Motor neuron (in vitro differentiated cells): ENCODE measurements at regions of chr6 and their contacts with region 1.

Region 1: DNA sequence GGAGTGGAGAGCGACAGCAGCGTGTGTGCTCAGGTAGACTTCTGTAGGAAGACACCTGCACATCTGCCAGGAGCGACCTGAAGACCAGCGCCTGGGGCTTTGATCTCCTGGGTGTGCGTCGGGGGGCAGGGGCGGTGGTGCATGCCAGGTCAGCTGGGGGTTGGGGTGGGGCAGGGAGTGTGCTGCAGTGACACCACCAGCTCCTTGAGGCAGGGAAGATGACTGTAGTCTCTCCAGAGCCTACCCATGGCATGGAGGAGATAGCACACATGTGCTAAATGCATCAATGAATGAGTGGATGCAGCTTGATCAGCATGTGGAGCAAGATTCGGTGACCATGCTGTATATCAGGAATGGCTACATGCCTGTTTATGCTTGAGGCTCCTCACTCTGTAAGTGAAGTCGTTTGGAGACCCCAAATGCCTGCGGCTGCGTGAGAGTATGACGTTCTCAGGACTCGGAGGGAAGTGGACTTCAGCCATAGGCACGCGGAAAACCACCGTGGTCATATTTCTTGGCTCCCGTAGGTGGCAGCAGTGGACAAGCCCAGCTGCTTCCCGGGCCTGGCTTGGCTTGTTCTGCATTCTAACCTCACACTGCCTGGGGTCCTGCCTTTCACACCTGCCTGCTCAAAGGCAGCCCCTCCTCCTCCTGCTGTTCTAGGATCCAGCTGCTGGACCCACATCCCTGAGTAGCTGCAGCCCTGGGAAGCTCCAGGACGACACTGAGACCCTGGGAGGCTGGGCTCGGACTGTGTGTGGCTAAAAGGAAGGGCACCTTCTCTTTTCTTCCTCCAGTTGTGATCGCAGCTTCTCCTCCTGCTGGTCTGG is 39.4 kb upstream of the KCNK16 start:
- ATAC-seq: peak; percentile 85 to 97 (median 90)
- H3K4me3 ChIP-seq: no peak overlapping the region
- H3K27ac ChIP-seq: peak overlapping the region in 1 of 2 donors; percentile 26
- H3K4me1 ChIP-seq: peaks cover 6 to 8% of the 10 kb centered on the region in 2 donors

Region 2: DNA sequence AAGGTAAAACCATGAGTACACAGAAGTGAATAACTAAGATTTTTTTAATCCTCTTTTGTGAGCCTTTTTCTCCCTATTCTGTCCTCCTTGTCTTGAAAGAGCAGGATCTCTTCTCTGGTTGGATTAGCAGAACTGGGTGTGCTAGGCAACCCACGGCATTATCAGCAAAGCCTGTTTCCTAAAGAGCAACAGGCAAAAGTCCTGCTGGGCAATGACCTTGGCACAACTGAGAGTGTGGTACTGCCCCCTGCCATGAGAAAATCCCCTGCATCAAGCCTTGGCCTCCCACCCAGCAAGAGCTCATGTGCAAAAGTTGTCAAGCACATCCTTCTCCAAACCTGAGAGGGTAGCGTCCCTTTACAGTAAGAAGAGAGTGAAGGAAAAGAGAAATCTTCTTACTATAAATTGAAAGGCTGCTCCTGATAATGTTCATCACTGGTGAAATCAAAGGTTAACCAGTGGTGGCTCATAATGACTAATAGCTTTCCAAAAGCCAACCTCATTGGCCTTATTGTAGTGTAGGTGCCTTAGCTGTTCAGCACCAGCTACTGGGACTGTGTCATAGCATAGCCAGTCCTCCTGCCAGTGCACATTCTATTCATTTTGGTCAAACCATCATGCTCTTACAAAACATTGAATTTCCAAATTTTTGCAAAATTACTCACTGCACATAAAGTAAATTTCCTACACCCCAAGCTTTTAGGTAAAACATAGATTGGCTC is 346.3 kb after region 1 on chr6:
- in situ Hi-C with region 1: no loop called
- ATAC-seq: no peak
- H3K4me3 ChIP-seq: no peak overlapping the region
- H3K27ac ChIP-seq: no peak overlapping the region
- H3K4me1 ChIP-seq: no peaks in the 10 kb centered on the region

Region 3: GRCh38 chr6:39804466-39805065 is 442.7 kb after region 1 on chr6:
- in situ Hi-C with region 1: no loop called
- ATAC-seq: peak in 4 of 8 experiments; percentile 21 to 91 (median 52)
- H3K4me3 ChIP-seq: no peak overlapping the region
- H3K27ac ChIP-seq: no peak overlapping the region
- H3K4me1 ChIP-seq: peaks cover 7 to 16% of the 10 kb centered on the region in 2 donors

Region 4: DNA sequence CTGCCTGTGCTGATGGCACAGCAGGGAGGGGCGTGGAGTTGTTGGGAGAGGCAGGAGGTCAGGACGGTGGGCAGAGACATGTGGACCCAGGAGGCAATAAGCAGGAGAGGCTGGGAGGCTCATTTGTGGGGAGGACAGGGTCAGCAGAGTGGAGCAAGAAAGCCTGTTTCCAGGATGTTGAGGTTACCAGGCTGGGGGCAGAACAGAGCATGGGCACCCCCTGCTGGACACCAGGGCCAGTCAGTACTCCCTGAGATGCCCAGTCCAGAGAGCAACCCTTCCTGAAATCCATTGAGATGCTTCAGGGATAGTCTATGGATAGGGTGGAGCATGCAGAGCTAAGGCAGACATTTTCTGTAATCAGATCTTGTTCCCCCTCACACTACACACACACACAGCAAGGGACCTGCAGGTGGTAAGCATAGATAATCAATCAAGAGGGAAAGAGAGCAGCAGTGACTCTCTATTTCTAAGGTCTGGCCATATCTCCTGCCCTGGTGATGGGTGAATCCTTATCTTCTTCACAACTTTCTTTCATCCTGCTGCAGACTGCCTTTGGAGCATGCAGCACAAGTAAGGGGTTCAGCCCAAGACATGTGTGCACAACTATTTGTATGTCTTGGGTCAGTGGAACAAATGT is 530.7 kb after region 1 on chr6:
- in situ Hi-C with region 1: loop called in 1 of 9 experiments (anchors 25 kb)
- ATAC-seq: peak; percentile 54 to 84 (median 66)
- H3K4me3 ChIP-seq: no peak overlapping the region
- H3K27ac ChIP-seq: no peak overlapping the region
- H3K4me1 ChIP-seq: no peaks in the 10 kb centered on the region

Region 5: GRCh38 chr6:39923414-39923813 is 561.5 kb after region 1 on chr6:
- in situ Hi-C with region 1: loop called in 1 of 9 experiments (anchors 25 kb)
- ATAC-seq: no peak
- H3K4me3 ChIP-seq: no peak overlapping the region
- H3K27ac ChIP-seq: no peak overlapping the region
- H3K4me1 ChIP-seq: no peaks in the 10 kb centered on the region

Region 6: DNA sequence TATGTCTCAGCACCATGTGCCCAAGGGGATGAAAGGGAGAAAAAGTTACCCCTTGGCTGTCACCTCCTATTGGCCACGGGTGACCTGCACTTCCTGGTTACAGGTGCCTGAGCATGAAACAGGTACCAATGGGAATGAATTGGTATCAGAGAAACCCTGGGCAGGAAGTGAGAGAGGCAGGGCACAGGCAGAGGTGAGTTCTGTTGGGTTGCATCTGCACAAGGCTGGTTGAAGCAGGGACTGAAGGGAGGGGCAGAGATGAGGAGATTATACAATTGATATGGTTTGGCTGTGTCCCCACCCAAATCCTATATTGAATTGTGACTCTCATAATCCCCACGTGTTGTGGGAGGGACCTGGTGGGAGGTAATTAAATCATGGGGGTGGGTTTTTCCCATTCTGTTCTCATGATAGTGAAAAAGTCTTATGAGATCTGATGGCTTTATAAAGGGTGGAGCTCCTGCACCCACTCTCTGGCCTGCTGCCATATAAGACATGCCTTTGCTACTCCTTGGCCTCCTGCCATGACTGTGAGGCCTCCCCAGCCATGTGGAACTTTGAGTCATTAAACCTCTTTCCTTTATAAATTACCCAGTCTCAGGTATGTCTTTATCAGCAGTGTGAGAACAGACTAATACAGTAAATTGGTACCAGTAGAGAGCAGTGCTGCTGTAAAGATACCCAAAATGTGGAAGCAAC is 933.5 kb after region 1 on chr6:
- in situ Hi-C with region 1: loop called in 4 of 9 experiments (anchors 25 kb)
- ATAC-seq: peak in 1 of 8 experiments; percentile 30
- H3K4me3 ChIP-seq: no peak overlapping the region
- H3K27ac ChIP-seq: no peak overlapping the region
- H3K4me1 ChIP-seq: peaks cover 11 to 12% of the 10 kb centered on the region in 2 donors

Region 7: GRCh38 chr6:40308533-40309306 is 946.8 kb after region 1 on chr6:
- in situ Hi-C with region 1: loop called in 3 of 9 experiments (anchors 25 kb)
- ATAC-seq: peak; percentile 60 to 98 (median 74)
- H3K4me3 ChIP-seq: no peak overlapping the region
- H3K27ac ChIP-seq: no peak overlapping the region
- H3K4me1 ChIP-seq: peaks cover 0 to 5% of the 10 kb centered on the region in 2 donors

Region 8: DNA sequence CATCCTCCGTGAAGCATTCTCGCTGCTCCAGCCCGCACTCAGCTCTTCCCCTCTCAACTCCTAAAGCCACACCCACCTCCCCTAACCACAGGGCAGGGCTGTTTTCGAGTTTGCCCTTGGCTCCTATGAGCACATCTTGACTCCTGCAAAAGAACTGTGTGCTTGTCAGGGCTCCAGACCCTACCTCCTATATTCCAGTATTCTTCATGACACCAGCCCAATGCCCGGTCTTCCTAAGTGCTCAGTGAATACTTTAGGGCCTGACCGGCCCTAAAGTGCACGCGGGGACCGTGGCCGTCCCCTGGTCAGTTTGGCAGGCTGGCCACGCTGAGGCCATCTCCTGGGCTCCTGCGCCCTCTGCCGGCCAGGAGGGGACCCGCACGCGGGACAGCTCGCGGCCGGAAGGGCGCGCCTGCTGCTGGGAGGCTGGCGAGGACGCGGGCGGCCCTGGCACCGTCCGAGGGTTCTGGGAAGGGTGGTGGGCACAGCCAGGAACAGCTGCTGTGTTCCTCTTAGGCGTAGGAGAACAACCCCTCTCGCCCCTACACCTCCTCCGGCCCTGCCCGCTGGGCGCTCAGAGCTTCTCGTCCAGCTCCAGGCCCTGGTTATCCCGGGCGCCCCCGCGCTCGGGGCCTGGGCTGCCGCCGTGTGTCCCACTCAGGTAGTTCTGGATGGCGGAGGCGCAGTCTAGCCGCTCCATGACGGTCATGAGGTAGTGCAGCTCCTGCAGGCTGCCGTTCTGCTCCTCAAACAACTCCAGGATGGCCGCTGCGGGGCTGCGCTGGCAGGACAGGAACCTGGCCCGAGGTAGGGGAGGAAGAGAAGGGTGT is 1666.1 kb after region 1 on chr6:
- in situ Hi-C with region 1: loop called in 1 of 9 experiments (anchors 25 kb)
- ATAC-seq: peak; percentile 92 to 97 (median 94)
- H3K4me3 ChIP-seq: peak overlapping the region; percentile 7 to 28 (median 21)
- H3K27ac ChIP-seq: no peak overlapping the region
- H3K4me1 ChIP-seq: peaks cover 0 to 2% of the 10 kb centered on the region in 2 donors

Region 9: GRCh38 chr6:41072676-41073623 is 1711.1 kb after region 1 on chr6 and contains the start of gene NFYA:
- in situ Hi-C with region 1: loop called in 3 of 9 experiments (anchors 25 kb)
- ATAC-seq: peak; percentile 66 to 85 (median 83)
- H3K4me3 ChIP-seq: peak within 1 kb of the TSS; percentile 55 to 79 (median 66)
- H3K27ac ChIP-seq: peak within 1 kb of the TSS; percentile 95
- H3K4me1 ChIP-seq: peaks cover 0 to 7% of the 10 kb centered on the region in 2 donors
- total RNA-seq, gene NFYA: 14.4 to 40.9 (median 20.4) TPM